BJ (cell line): ENCODE measurements at regions of chr11 and their contacts with region 1.

Region 1: DNA sequence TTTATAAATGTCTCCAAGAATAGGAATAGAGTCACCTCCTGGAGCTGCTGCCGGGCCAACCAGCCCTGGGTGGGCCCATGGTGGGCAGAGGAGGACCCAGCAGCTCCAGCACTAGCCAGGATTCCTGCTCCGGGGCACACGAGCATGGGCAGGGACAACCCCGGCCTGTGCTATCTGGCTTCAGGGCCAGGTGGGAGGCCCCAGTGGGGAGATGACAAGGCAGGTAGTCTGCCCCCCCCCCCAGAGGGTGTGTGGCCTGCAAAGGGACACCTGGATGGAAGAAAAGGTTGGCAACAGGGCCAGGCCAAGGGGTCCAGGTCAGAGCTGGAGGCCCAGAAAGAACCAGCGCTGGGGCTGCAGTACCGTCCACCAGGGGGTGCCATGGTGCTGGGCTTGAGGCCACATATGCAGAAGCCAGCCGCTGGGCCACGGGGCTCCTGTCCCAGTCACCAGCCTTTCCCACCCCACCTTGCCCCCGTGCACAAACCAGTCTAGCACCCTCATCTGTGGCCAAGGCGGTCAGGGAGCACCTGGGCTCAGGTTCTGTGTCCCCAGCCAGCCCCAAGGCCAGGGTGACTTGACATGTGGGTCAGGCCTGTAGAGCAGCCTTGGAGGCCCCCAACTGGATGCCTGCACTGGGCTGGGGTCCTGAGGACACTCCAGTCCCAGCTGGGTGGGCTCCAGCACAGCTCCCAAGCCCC is 3.5 kb downstream of the TSPAN32 start:
- DNase-seq: no peak
- H3K4me3 ChIP-seq: no peak overlapping the region
- H3K27me3 ChIP-seq: no peaks in the 10 kb centered on the region
- CTCF ChIP-seq: peak; percentile 97

Region 2: DNA sequence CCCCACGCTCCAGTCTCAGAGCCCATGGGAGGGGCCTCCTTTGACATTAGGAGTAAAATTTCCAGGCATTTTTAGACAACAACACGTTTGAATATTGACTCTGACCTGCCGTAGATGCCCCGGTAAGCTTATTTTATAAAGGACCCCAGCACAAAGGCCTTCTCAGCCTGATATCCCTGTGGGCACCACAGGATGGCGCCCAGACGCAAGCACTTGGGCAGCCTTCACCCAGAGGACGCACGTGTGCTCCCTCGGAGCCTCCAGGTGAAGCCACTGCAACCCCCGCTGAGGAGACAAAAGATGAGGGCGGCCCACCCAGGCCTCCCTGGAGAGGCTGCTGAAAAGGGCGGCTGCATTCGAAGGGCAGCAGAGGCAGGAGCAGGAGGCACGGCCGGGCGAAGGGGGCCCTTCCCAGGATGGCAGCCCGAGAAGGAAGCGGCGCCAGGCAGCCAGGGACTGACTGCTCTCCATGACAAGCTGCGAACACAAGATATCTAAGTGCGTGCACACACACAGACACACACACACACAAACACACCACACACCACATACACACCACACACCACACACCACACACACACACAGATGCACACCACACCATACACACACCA is 118.5 kb before region 1 on chr11:
- CTCF ChIA-PET with region 1: interaction called, 27 read pairs
- POLR2A ChIA-PET with region 1: no interaction called
- DNase-seq: no peak
- H3K4me3 ChIP-seq: no peak overlapping the region
- H3K27me3 ChIP-seq: peaks cover 1% of the 10 kb centered on the region
- CTCF ChIP-seq: peak; percentile 46; the same call in 1 of the 2 replicates

Region 3: GRCh38 chr11:2277008-2277346 is 28.3 kb before region 1 on chr11:
- CTCF ChIA-PET with region 1: interaction called, 16 read pairs
- POLR2A ChIA-PET with region 1: no interaction called
- DNase-seq: no peak
- H3K4me3 ChIP-seq: no peak overlapping the region
- H3K27me3 ChIP-seq: peaks cover 13% of the 10 kb centered on the region
- CTCF ChIP-seq: no peak

Region 4: GRCh38 chr11:2382936-2383851 is 77.9 kb after region 1 on chr11:
- CTCF ChIA-PET with region 1: interaction called, 21 read pairs
- POLR2A ChIA-PET with region 1: interaction called, 13 read pairs
- DNase-seq: no peak
- H3K4me3 ChIP-seq: no peak overlapping the region
- H3K27me3 ChIP-seq: no peaks in the 10 kb centered on the region
- CTCF ChIP-seq: peak; percentile 8; the same call in 1 of the 2 replicates

Region 5: DNA sequence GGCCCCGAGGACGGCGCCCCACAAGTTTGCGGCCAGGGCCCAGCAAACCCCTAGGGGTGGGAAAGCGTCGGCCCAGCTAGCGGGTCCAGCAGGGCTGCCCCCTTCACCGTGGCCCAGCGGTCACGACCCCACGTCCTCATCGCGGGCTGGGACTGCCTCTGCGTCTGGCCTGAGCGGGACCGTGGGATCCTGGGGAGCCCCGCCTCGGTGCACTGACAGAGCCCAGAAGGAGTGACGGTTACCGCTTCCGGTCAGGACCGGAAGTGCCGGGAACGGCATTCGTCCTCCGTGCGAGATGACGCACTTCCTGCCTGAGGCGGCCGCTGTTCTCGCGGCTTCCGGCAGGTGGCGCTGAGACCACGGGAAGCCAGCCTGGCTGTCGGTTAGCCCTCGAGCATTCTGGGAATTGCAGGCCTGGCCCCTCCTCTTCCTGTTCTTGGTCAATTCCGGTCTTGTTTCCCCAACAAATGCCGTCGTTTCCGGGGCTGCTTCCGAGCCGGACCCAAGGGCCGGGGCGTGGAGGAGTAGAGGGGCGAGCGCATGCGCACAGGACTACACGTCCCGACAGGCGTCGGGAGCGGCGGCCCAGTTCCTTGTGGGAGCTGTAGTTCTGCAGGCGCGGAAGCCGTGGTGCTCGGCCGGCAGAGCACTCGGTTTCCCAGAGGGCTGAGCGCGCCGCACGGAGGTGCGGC is 94.9 kb after region 1 on chr11 and contains the start of gene TSSC4:
- CTCF ChIA-PET with region 1: interaction called, 43 read pairs
- POLR2A ChIA-PET with region 1: interaction called, 6 read pairs
- DNase-seq: peak; percentile 100
- H3K4me3 ChIP-seq: peak within 1 kb of the TSS; percentile 100
- H3K27me3 ChIP-seq: no peaks in the 10 kb centered on the region
- CTCF ChIP-seq: peak; percentile 99
- polyA plus RNA-seq, gene TSSC4: 16.3 and 30.5 TPM in 2 replicates

Region 6: DNA sequence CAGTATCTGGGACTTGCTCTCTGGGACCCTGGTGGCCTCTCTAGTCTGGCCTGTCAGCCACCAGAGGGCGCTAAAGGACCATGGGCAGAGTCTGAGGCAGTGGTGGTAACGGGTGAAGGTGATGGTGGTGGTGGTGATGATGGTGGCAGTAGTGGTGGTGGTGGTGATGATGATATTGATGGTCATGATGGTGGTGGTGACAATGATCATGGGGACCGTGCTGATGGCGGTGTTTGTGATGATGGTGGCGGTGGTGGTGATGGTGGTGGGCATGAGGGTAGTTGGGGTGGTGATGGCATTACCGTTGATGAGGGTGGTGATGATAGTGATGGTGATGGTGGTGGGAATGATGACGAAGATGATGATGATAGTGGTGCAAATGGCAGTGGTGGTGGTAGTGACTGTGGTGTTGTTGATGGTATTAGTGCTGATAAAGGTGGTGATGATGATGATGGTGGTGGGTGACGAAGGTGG is 123.1 kb after region 1 on chr11:
- CTCF ChIA-PET with region 1: interaction called, 519 read pairs
- POLR2A ChIA-PET with region 1: interaction called, 15 read pairs
- DNase-seq: no peak
- H3K4me3 ChIP-seq: no peak overlapping the region
- H3K27me3 ChIP-seq: no peaks in the 10 kb centered on the region
- CTCF ChIP-seq: peak; percentile 86